Common myeloid progenitor, CD34-positive (primary cell): ENCODE measurements at regions of chr20 and their contacts with region 1.

Region 1: DNA sequence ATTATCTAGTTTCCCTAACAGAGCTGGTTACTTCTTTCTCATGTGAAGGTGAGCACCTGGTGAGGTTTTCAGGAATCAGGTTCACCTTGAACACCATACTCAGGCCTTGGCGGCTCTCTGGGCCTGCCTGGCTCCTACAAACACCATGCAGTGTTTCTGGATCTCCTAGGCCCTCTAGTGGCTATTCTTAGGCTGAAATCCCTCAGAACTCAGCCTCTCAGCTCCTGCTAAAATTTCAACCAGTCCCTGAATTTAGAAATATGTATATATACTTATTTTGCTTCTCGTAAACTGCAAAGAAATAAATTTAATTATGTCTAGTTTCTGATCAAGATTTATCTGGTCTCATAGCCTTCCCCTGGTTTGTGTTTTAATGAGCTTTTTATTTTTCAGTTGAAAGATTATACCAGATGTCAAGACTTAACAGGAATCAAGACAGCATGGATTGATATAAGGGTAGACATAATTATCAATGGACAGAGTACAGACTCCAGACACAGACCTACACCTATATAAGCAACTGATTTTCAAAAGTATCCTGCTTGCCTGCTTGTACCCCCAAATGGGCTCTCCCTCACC is 55.9 kb downstream of the ANKEF1 start:
- DNase-seq: peak; percentile 43 to 68 (median 58)
- H3K4me3 ChIP-seq: no peak overlapping the region
- H3K27ac ChIP-seq: no peak overlapping the region
- H3K4me1 ChIP-seq: no peaks in the 10 kb centered on the region
- H3K27me3 ChIP-seq: no peaks in the 10 kb centered on the region

Region 2: GRCh38 chr20:9945408-9945807 is 145.3 kb before region 1 on chr20:
- CTCF ChIA-PET with region 1: no interaction called
- POLR2A ChIA-PET with region 1: no interaction called
- DNase-seq: no peak
- H3K4me3 ChIP-seq: no peak overlapping the region
- H3K27ac ChIP-seq: no peak overlapping the region
- H3K4me1 ChIP-seq: no peaks in the 10 kb centered on the region
- H3K27me3 ChIP-seq: peaks cover 0 to 9% (median 0%) of the 10 kb centered on the region in 5 experiments

Region 3: GRCh38 chr20:9978397-9979004 is 112.2 kb before region 1 on chr20:
- CTCF ChIA-PET with region 1: interaction called, 138 read pairs
- POLR2A ChIA-PET with region 1: interaction called, 3 read pairs
- DNase-seq: peak; percentile 86 to 91 (median 91)
- H3K4me3 ChIP-seq: peak overlapping the region in 1 of 7 experiments; percentile 51
- H3K27ac ChIP-seq: no peak overlapping the region
- H3K4me1 ChIP-seq: peaks cover 0 to 2% (median 0%) of the 10 kb centered on the region in 4 experiments
- H3K27me3 ChIP-seq: peaks cover 0 to 3% (median 0%) of the 10 kb centered on the region in 5 experiments

Region 4: GRCh38 chr20:9985773-9986172 is 104.9 kb before region 1 on chr20:
- CTCF ChIA-PET with region 1: interaction called, 138 read pairs
- POLR2A ChIA-PET with region 1: no interaction called
- DNase-seq: no peak
- H3K4me3 ChIP-seq: no peak overlapping the region
- H3K27ac ChIP-seq: no peak overlapping the region
- H3K4me1 ChIP-seq: peaks cover 0 to 13% (median 3%) of the 10 kb centered on the region in 4 experiments
- H3K27me3 ChIP-seq: no peaks in the 10 kb centered on the region

Region 5: GRCh38 chr20:10077081-10077471 is 13.6 kb before region 1 on chr20:
- CTCF ChIA-PET with region 1: interaction called, 34 read pairs
- POLR2A ChIA-PET with region 1: no interaction called
- DNase-seq: no peak
- H3K4me3 ChIP-seq: peak overlapping the region in 2 of 7 experiments; percentile 26 to 34
- H3K27ac ChIP-seq: no peak overlapping the region
- H3K4me1 ChIP-seq: peaks cover 0 to 26% (median 16%) of the 10 kb centered on the region in 4 experiments
- H3K27me3 ChIP-seq: no peaks in the 10 kb centered on the region

Region 6: GRCh38 chr20:10105046-10105445 is 14.4 kb after region 1 on chr20:
- CTCF ChIA-PET with region 1: interaction called, 17 read pairs
- POLR2A ChIA-PET with region 1: no interaction called
- DNase-seq: no peak
- H3K4me3 ChIP-seq: no peak overlapping the region
- H3K27ac ChIP-seq: no peak overlapping the region
- H3K4me1 ChIP-seq: no peaks in the 10 kb centered on the region
- H3K27me3 ChIP-seq: no peaks in the 10 kb centered on the region

Region 7: GRCh38 chr20:10427060-10427692 is 336.5 kb after region 1 on chr20:
- CTCF ChIA-PET with region 1: interaction called, 24 read pairs
- POLR2A ChIA-PET with region 1: no interaction called
- DNase-seq: peak; percentile 61 to 76 (median 74)
- H3K4me3 ChIP-seq: no peak overlapping the region
- H3K27ac ChIP-seq: no peak overlapping the region
- H3K4me1 ChIP-seq: peaks cover 0 to 20% (median 7%) of the 10 kb centered on the region in 4 experiments
- H3K27me3 ChIP-seq: no peaks in the 10 kb centered on the region

Region 8: DNA sequence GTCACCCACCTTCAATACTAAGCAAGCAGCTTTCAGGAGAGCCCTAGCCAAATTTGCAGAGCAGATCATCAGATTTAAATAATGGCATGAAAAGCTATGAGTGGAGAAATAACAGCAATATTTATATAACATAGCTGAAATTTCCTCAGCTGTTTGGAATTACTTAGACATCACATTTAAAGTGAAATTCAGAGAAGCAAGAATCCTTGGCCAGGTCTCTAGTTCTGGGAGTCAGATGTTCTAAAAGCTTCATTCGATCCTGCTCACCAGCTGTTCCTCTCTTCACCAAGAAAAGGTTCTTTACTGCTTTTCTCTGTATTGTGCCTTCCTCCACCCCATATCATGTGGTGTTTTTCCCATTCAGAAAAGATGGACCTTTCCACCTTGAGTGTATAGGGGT is 735.4 kb after region 1 on chr20:
- CTCF ChIA-PET with region 1: no interaction called
- POLR2A ChIA-PET with region 1: no interaction called
- DNase-seq: no peak
- H3K4me3 ChIP-seq: no peak overlapping the region
- H3K27ac ChIP-seq: no peak overlapping the region
- H3K4me1 ChIP-seq: no peaks in the 10 kb centered on the region
- H3K27me3 ChIP-seq: peaks cover 0 to 5% (median 0%) of the 10 kb centered on the region in 5 experiments